Thyroid gland (tissue), 4 donors: ENCODE measurements at regions of chr20 and their contacts with region 1.

Region 1: DNA sequence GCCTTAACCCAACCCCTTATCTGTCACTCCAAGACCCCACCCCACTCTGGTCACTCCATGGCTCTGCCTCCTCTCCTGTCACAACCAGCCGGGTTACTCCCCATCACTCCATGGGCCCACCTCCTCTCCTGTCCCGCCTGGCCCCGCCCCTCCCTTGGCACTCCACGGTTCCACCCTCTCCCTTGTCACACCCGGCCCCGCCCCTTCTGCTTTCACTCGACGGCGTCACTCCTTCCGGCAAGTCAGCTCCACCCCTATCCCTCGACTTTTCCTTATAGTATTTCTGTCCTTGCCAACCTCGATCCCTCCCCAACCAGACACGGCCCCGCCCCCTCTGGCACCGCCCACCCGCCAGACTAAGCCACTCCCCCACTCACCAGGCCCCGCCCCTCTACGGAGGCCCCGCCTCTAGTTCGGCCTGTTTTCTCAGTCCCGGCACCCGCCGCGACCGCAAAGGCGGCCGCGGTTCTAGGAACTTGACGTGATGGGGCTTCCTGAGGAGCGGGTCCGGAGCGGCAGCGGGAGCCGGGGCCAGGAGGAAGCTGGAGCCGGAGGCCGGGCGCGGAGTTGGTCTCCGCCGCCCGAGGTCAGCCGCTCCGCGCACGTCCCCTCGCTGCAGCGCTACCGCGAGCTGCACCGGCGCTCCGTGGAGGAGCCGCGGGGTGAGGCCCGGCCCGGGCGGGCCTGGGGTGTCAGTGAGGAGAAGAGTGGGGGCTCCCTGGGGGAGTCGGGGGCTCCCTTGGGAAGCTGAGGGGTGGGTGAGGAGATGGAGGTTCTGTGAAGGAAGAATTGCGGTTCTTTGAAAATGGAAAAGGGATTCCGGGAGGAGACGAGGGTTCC is at the start of gene ACSS2:
- DNase-seq: peak; percentile 100
- H3K4me3 ChIP-seq: peak within 1 kb of the TSS; percentile 61 to 88 (median 78)
- H3K27ac ChIP-seq: peak within 1 kb of the TSS; percentile 70 to 86 (median 76)
- H3K4me1 ChIP-seq: peaks cover 14 to 20% of the 10 kb centered on the region in 2 donors
- H3K27me3 ChIP-seq: no peaks in the 10 kb centered on the region
- CTCF ChIP-seq: no peak
- POLR2A ChIP-seq: peak; percentile 51 to 86
- total RNA-seq, gene ACSS2: 48.5 to 89.6 (median 68.1) TPM

Region 2: DNA sequence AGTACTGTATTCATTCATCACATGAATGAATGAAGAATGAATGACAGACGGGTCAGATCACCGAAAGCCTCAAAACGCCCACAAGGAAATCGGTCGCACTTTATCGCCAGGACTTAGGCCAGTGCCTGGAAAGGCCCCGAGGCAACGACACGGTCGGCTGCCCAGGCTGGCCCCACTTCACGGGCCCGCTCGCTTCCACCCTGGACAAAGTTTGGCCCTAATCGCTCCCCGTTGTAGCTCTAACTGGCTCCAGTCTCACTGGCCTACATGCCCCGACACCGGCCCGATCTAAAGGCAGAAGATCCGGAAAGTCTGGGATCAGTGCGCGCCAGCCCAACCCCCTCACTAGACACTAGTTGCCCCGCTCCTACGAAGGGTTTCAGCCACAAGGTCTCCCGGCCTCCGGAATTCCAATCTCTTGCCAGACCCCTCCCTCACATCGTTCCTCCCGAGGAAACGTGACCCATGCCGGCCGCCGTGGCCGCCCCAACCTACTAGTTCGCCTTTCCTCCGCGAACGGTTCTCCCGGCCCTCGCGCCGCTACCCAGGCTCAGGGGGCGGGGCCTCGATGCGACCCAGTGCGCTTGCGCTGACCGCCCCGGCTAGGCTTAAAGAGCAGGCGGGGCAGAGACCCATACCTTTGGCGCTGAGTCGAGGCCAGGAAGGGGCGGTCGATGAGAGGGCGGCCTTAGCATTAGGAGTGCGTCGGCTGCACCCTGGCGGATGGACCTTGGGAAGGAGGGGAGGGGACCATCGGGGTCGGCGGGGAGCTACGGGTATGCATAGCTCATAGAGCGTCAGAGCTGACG is 79.1 kb after region 1 on chr20 and contains the starts of genes GSS and MYH7B:
- intact Hi-C with region 1: loop called (anchors 5 kb)
- DNase-seq: peak; percentile 98
- H3K4me3 ChIP-seq: peak within 1 kb of the TSS; percentile 4 to 50 (median 19)
- H3K27ac ChIP-seq: peak within 1 kb of the TSS; percentile 40 to 91 (median 84)
- H3K4me1 ChIP-seq: peaks cover 0 to 12% of the 10 kb centered on the region in 2 donors
- H3K27me3 ChIP-seq: no peaks in the 10 kb centered on the region
- CTCF ChIP-seq: peak in 4 of 6 experiments; percentile 27 to 62 (median 50)
- POLR2A ChIP-seq: peak in 1 of 2 donors; percentile 88
- total RNA-seq, gene GSS: 45.7 to 81.8 (median 62.4) TPM
- total RNA-seq, gene MYH7B: 0.63 to 2.0 (median 1.4) TPM

Region 3: GRCh38 chr20:35092524-35093266 is 216.3 kb after region 1 on chr20 and contains the start of gene TRPC4AP:
- intact Hi-C with region 1: loop called (anchors 10 kb)
- DNase-seq: peak; percentile 85 to 89
- H3K4me3 ChIP-seq: peak within 1 kb of the TSS; percentile 69 to 94 (median 79)
- H3K27ac ChIP-seq: peak within 1 kb of the TSS; percentile 84 to 95 (median 90)
- H3K4me1 ChIP-seq: peaks cover 20 to 30% of the 10 kb centered on the region in 2 donors
- H3K27me3 ChIP-seq: no peaks in the 10 kb centered on the region
- CTCF ChIP-seq: peak; percentile 77 to 98 (median 96)
- POLR2A ChIP-seq: peak in 1 of 2 donors; percentile 82
- total RNA-seq, gene TRPC4AP: 53.3 to 76.8 (median 73.5) TPM